Transverse colon (tissue), 4 donors: ENCODE measurements at regions of chr19 and their contacts with region 1.

Region 1: GRCh38 chr19:43474986-43475705 is 9.7 kb upstream of the LYPD3 start:
- DNase-seq: peak; percentile 97
- H3K4me3 ChIP-seq: peak overlapping the region; percentile 16 to 45 (median 23)
- H3K27ac ChIP-seq: peak overlapping the region; percentile 76 to 84 (median 82)
- H3K4me1 ChIP-seq: peaks cover 3 to 17% (median 8%) of the 10 kb centered on the region in 4 donors
- H3K27me3 ChIP-seq: no peaks in the 10 kb centered on the region
- CTCF ChIP-seq: no peak
- EP300 ChIP-seq: no peak
- POLR2A ChIP-seq: peak; percentile 36

Region 2: GRCh38 chr19:43503501-43504425 is 28.6 kb after region 1 on chr19:
- in situ Hi-C with region 1: no loop called
- intact Hi-C with region 1: loop called (anchors 2 kb)
- DNase-seq: peak; percentile 98
- H3K4me3 ChIP-seq: peak overlapping the region; percentile 52 to 85 (median 74)
- H3K27ac ChIP-seq: peak overlapping the region; percentile 85 to 93 (median 90)
- H3K4me1 ChIP-seq: peaks cover 9 to 28% (median 17%) of the 10 kb centered on the region in 4 donors
- H3K27me3 ChIP-seq: no peaks in the 10 kb centered on the region
- CTCF ChIP-seq: no peak
- EP300 ChIP-seq: no peak
- POLR2A ChIP-seq: peak; percentile 19

Region 3: DNA sequence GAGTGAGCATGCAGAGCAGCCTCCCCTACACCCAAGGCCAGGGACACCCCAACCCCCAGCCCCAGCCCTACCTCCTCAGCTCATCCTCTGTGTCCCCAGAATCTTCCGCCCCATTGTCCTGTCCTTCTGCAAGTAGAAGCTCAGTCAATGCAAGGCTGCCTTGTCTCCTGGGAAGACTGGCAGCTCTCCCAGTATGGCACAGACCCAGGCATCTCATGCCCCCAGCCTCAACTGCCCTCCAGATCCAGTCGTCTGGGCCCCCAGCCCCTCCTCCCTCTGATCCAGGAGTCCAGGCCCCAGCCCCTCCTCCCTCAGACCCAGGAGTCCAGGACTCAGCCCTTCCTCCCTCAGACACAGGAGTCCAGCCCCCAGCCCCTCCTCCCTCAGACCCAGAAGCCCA is 70.8 kb after region 1 on chr19:
- in situ Hi-C with region 1: no loop called
- intact Hi-C with region 1: no loop called
- DNase-seq: no peak
- H3K4me3 ChIP-seq: no peak overlapping the region
- H3K27ac ChIP-seq: no peak overlapping the region
- H3K4me1 ChIP-seq: no peaks in the 10 kb centered on the region
- H3K27me3 ChIP-seq: no peaks in the 10 kb centered on the region
- CTCF ChIP-seq: no peak
- EP300 ChIP-seq: no peak
- POLR2A ChIP-seq: no peak